ENCODE measurements at regions of chr17 and their contacts with region 1.

Region 1: GRCh38 chr17:29710891-29711418 is 88.2 kb upstream of the CORO6 start:
- DNase-seq: no peak
- ATAC-seq: no peak
- H3K4me3 ChIP-seq: no peak overlapping the region
- H3K4me3 Mint-ChIP-seq: peak overlapping the region; percentile 8
- H3K27ac ChIP-seq: peak overlapping the region; percentile 15 to 31
- H3K27ac Mint-ChIP-seq: peak overlapping the region; percentile 39
- H3K4me1 ChIP-seq: peaks cover 52 to 72% of the 10 kb centered on the region in 2 donors
- H3K4me1 Mint-ChIP-seq: peaks cover 81% of the 10 kb centered on the region
- H3K27me3 ChIP-seq: no peaks in the 10 kb centered on the region
- H3K27me3 Mint-ChIP-seq: no peaks in the 10 kb centered on the region
- CTCF ChIP-seq: no peak

Region 2: DNA sequence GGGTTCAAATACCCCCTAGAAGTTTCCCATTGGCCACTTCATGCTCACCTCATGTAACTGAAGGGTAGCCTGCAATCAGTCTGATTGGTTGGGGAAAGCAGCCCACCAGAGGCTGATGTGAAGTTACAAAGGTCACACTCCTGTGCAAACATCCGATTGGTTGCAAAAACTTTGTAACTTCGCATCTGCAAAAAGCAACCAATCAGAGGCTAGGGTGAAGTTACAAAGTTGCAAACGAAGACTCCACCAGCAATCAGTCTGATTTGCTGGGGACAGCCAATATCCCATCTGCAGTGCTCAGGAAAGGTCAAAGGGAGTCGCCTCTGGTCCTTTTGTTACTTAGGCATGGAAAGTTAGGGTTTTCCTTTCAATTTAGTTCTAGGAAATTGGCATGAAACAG is 280.7 kb before region 1 on chr17:
- CTCF ChIA-PET with region 1: no interaction called
- POLR2A ChIA-PET with region 1: no interaction called
- intact Hi-C with region 1: no loop called
- DNase-seq: no peak
- ATAC-seq: no peak
- H3K4me3 ChIP-seq: no peak overlapping the region
- H3K4me3 Mint-ChIP-seq: no peak overlapping the region
- H3K27ac ChIP-seq: no peak overlapping the region
- H3K27ac Mint-ChIP-seq: no peak overlapping the region
- H3K4me1 ChIP-seq: peaks cover 9 to 14% of the 10 kb centered on the region in 2 donors
- H3K4me1 Mint-ChIP-seq: peaks cover 26% of the 10 kb centered on the region
- H3K27me3 ChIP-seq: no peaks in the 10 kb centered on the region
- H3K27me3 Mint-ChIP-seq: no peaks in the 10 kb centered on the region
- CTCF ChIP-seq: no peak

Region 3: GRCh38 chr17:29524460-29525091 is 186.4 kb before region 1 on chr17:
- CTCF ChIA-PET with region 1: no interaction called
- POLR2A ChIA-PET with region 1: interaction called, 11 read pairs
- intact Hi-C with region 1: no loop called
- DNase-seq: no peak
- ATAC-seq: no peak
- H3K4me3 ChIP-seq: no peak overlapping the region
- H3K4me3 Mint-ChIP-seq: no peak overlapping the region
- H3K27ac ChIP-seq: no peak overlapping the region
- H3K27ac Mint-ChIP-seq: no peak overlapping the region
- H3K4me1 ChIP-seq: no peaks in the 10 kb centered on the region
- H3K4me1 Mint-ChIP-seq: no peaks in the 10 kb centered on the region
- H3K27me3 ChIP-seq: no peaks in the 10 kb centered on the region
- H3K27me3 Mint-ChIP-seq: no peaks in the 10 kb centered on the region
- CTCF ChIP-seq: no peak

Region 4: GRCh38 chr17:29740017-29740416 is 29.1 kb after region 1 on chr17:
- CTCF ChIA-PET with region 1: interaction called, 4 read pairs
- POLR2A ChIA-PET with region 1: no interaction called
- intact Hi-C with region 1: loop called (anchors 5 kb)
- DNase-seq: no peak
- ATAC-seq: no peak
- H3K4me3 ChIP-seq: no peak overlapping the region
- H3K4me3 Mint-ChIP-seq: peak overlapping the region; percentile 3
- H3K27ac ChIP-seq: peak overlapping the region in 1 of 2 donors; percentile 71
- H3K27ac Mint-ChIP-seq: peak overlapping the region; percentile 62
- H3K4me1 ChIP-seq: peaks cover 36 to 37% of the 10 kb centered on the region in 2 donors
- H3K4me1 Mint-ChIP-seq: peaks cover 54% of the 10 kb centered on the region
- H3K27me3 ChIP-seq: no peaks in the 10 kb centered on the region
- H3K27me3 Mint-ChIP-seq: no peaks in the 10 kb centered on the region
- CTCF ChIP-seq: no peak